ENCODE measurements at regions of chr16 and their contacts with region 1.

Region 1: DNA sequence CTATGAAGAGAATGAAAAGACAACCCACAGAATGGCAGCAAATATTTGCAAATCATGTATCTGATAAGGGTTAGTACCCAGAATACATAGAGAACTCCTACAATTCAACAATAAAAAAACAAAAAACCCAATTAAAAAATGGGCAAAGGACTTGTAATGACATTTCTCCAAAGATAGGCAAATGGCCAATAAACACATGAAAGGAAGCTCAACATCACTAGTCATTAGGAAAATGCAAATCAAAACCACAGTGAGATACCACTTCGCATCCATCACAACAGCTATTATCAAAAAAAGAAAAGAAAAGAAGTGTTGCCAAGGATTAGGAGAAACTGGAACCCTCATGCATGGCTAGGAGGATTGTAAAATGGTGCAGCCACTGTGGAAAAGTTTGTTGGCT is 45.1 kb upstream of the ARL6IP1 start:
- DNase-seq: no peak
- ATAC-seq: no peak
- H3K4me3 ChIP-seq: no peak overlapping the region
- H3K27ac ChIP-seq: no peak overlapping the region
- H3K4me1 ChIP-seq: no peaks in the 10 kb centered on the region
- H3K27me3 ChIP-seq: no peaks in the 10 kb centered on the region
- CTCF ChIP-seq: no peak
- POLR2A ChIP-seq: no peak
- RAD21 ChIP-seq: no peak

Region 2: DNA sequence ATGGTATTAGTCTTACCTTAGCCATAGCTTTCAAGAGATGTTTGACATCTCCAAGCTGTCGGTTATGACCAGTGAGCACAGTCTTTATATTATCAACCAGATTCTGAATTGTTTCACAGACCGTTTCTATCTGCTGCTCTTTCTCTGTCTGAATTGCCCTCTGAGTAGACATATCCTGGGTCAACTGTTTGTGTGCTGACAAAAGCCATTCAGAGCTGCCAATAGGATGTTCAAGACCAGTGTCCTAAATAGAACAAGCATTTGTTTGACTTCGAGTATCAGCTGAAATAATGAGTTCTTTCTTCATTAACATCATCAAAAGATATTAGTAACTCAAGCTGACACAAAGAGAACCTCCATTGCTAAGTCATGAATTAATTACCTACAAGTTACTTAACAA is 30.1 kb before region 1 on chr16:
- CTCF ChIA-PET with region 1: no interaction called
- POLR2A ChIA-PET with region 1: no interaction called
- RAD21 ChIA-PET with region 1: no interaction called
- intact Hi-C with region 1: loop called (anchors 5 kb)
- DNase-seq: no peak
- ATAC-seq: no peak
- H3K4me3 ChIP-seq: no peak overlapping the region
- H3K27ac ChIP-seq: no peak overlapping the region
- H3K4me1 ChIP-seq: no peaks in the 10 kb centered on the region
- H3K27me3 ChIP-seq: no peaks in the 10 kb centered on the region
- CTCF ChIP-seq: no peak
- POLR2A ChIP-seq: no peak
- RAD21 ChIP-seq: no peak

Region 3: GRCh38 chr16:20517149-20517548 is 1670.7 kb after region 1 on chr16:
- CTCF ChIA-PET with region 1: no interaction called
- POLR2A ChIA-PET with region 1: no interaction called
- RAD21 ChIA-PET with region 1: no interaction called
- intact Hi-C with region 1: no loop called
- DNase-seq: no peak
- ATAC-seq: no peak
- H3K4me3 ChIP-seq: no peak overlapping the region
- H3K27ac ChIP-seq: no peak overlapping the region
- H3K4me1 ChIP-seq: no peaks in the 10 kb centered on the region
- H3K27me3 ChIP-seq: peaks cover 19% of the 10 kb centered on the region
- CTCF ChIP-seq: no peak
- POLR2A ChIP-seq: no peak
- RAD21 ChIP-seq: no peak

Measured in HCT116 (cell line).